Left lung (tissue), 14 donors: ENCODE measurements at regions of chr4 and their contacts with region 1.

Region 1: GRCh38 chr4:89661490-89661889 is 175.5 kb downstream of the SNCA start:
- DNase-seq: no peak
- ATAC-seq: no peak
- H3K4me3 ChIP-seq: no peak overlapping the region
- H3K27ac ChIP-seq: no peak overlapping the region
- H3K4me1 ChIP-seq: no peaks in the 10 kb centered on the region
- H3K27me3 ChIP-seq: no peaks in the 10 kb centered on the region
- CTCF ChIP-seq: no peak

Region 2: GRCh38 chr4:89878611-89879010 is 217.1 kb after region 1 on chr4:
- intact Hi-C with region 1: loop called in 1 of 2 experiments (anchors 10 kb)
- DNase-seq: no peak
- ATAC-seq: no peak
- H3K4me3 ChIP-seq: no peak overlapping the region
- H3K27ac ChIP-seq: no peak overlapping the region
- H3K4me1 ChIP-seq: no peaks in the 10 kb centered on the region
- H3K27me3 ChIP-seq: no peaks in the 10 kb centered on the region
- CTCF ChIP-seq: no peak

Region 3: DNA sequence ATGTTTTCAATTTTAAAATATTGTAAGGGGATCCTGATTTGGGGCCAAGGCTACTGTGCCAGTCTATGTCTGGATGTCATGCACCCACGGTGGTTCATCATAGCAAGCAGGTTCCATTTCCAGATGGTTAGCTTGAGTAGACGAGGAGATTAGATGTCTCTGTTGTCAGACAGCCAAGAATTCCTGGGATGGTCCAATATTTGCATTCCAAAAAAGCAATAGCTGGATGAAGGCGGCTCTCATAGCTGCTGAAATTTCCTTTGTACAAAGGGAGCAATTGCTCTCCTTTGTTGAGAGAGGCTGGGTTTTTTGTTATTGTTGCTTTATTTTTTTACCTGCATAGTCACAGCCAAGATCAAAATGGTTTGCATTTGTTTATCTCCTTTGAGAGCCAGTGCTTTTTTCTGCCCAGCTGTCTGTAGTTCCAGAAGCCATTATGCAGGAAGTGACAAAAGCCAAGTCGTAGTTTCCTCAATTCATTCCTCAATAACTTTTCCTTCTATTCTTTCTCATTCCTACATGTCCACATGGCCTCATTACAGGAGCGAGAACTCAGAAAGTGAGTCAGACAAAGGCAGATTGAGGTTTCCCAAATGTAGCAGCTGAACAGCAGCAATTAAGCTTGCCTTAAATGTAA is 341.1 kb after region 1 on chr4:
- intact Hi-C with region 1: no loop called
- DNase-seq: no peak
- ATAC-seq: no peak
- H3K4me3 ChIP-seq: no peak overlapping the region
- H3K27ac ChIP-seq: no peak overlapping the region
- H3K4me1 ChIP-seq: no peaks in the 10 kb centered on the region
- H3K27me3 ChIP-seq: no peaks in the 10 kb centered on the region
- CTCF ChIP-seq: no peak